ENCODE measurements at regions of chr3 and their contacts with region 1.

Region 1: DNA sequence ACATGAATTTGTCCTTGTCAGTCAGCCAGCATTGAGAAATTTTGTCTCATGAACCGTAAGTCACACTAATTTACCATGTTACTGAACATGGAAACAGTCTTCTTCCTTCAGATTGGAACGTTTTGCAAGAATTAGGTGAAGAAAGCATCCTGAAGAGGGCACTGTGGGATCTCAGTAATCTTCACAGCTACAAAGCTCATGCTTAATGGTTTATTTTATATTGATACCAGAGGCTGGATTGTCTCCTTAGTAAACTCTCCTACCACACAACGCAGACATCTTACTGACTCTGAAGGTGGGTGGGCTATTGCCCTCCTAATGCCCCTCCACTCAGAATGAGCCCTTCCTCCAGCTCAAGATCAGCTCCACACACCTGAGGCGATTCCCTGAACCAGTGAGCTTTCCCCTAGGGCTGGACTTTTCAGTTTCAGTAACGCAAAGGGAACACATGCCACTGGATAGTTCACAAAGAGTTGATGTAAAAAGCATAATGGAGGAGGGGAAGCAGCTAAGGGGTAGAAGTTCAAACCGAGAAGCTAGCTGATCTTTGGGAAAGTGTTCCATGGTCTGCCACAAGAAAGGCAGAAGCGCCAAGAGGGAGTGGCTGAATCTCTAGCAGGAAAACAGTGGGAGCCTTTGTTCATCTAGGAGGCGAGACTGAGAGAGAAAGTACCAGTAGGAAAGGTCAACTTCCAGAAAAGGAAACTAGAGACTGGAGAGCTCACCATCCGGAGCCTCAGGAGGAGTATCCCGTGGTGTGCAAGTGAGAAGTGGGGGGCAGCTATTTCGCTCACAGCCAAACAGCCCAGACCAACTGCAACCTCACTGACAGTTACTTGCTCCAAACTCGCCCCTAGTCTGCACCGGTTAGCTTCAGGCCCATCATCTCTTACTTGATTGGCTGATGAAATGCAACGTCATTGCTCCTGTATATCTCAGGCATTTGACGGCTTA is at the start of gene SLC9C1:
- DNase-seq: peak; percentile 52
- ATAC-seq: peak; percentile 81
- H3K4me3 Mint-ChIP-seq: peak within 1 kb of the TSS; percentile 53
- H3K27ac Mint-ChIP-seq: peak within 1 kb of the TSS; percentile 38
- H3K4me1 Mint-ChIP-seq: peaks cover 21% of the 10 kb centered on the region
- H3K27me3 Mint-ChIP-seq: no peaks in the 10 kb centered on the region
- total RNA-seq, gene SLC9C1: not detected

Region 2: DNA sequence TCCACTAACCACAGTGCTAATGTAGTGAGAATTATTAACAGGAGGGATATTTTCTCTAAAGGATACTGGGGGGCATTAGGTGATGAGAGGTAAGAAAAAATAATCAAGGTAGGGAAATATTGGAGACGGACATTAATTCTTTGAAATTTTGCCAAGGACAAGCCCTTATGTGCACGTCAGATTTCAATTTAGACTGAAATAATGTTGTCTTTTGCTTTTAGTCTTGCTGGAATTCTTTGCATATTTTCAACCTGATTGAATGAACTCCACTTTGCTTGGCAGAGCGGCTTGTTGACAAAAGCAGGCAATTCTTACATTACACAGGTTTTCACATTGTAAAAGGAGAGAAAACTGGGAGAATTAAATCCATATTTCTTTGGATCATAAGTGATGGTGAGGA is 232.5 kb before region 1 on chr3:
- CTCF ChIA-PET with region 1: no interaction called
- POLR2A ChIA-PET with region 1: no interaction called
- intact Hi-C with region 1: no loop called
- DNase-seq: no peak
- ATAC-seq: no peak
- H3K4me3 Mint-ChIP-seq: no peak overlapping the region
- H3K27ac Mint-ChIP-seq: no peak overlapping the region
- H3K4me1 Mint-ChIP-seq: peaks cover 15% of the 10 kb centered on the region
- H3K27me3 Mint-ChIP-seq: no peaks in the 10 kb centered on the region

Region 3: GRCh38 chr3:112233081-112233480 is 60.6 kb before region 1 on chr3:
- CTCF ChIA-PET with region 1: no interaction called
- POLR2A ChIA-PET with region 1: no interaction called
- intact Hi-C with region 1: no loop called
- DNase-seq: no peak
- ATAC-seq: no peak
- H3K4me3 Mint-ChIP-seq: no peak overlapping the region
- H3K27ac Mint-ChIP-seq: no peak overlapping the region
- H3K4me1 Mint-ChIP-seq: peaks cover 10% of the 10 kb centered on the region
- H3K27me3 Mint-ChIP-seq: no peaks in the 10 kb centered on the region

Region 4: DNA sequence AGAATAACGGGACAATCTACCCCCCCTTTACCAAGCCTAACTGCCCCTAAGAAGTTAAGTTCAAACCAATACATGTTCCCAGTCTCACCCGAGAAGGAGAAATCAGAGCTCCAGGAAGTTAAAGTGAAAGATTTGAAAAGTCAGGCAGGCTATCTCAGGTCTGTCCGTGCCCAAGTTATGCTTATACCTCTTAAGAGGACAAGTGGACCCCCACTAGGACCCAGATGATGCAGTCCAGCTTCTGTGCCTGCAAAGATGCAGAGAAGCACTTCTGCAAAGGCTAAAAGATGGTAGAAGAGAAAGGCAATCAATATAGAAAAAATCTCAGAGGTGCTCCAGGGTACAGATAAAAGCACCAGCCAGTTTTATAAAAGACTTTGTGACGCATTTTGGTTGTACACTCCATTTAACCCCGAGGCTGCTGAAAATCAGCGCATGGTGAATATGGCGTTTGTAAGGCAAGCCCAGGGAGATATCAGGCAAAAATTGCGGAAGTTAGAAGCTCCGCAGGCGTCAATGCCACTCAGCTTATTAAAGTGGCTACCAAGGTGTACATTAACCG is 10.2 kb after region 1 on chr3:
- CTCF ChIA-PET with region 1: interaction called, 33 read pairs
- POLR2A ChIA-PET with region 1: no interaction called
- intact Hi-C with region 1: no loop called
- DNase-seq: no peak
- ATAC-seq: peak; percentile 45
- H3K4me3 Mint-ChIP-seq: no peak overlapping the region
- H3K27ac Mint-ChIP-seq: no peak overlapping the region
- H3K4me1 Mint-ChIP-seq: no peaks in the 10 kb centered on the region
- H3K27me3 Mint-ChIP-seq: no peaks in the 10 kb centered on the region

Region 5: GRCh38 chr3:112327371-112327951 is 33.8 kb after region 1 on chr3:
- CTCF ChIA-PET with region 1: interaction called, 13 read pairs
- POLR2A ChIA-PET with region 1: interaction called, 4 read pairs
- intact Hi-C with region 1: loop called in 1 of 2 experiments (anchors 2 kb)
- DNase-seq: peak; percentile 54
- ATAC-seq: peak; percentile 100
- H3K4me3 Mint-ChIP-seq: no peak overlapping the region
- H3K27ac Mint-ChIP-seq: no peak overlapping the region
- H3K4me1 Mint-ChIP-seq: peaks cover 4% of the 10 kb centered on the region
- H3K27me3 Mint-ChIP-seq: peaks cover 7% of the 10 kb centered on the region

Region 6: GRCh38 chr3:112531358-112531781 is 237.7 kb after region 1 on chr3:
- CTCF ChIA-PET with region 1: interaction called, 27 read pairs
- POLR2A ChIA-PET with region 1: no interaction called
- intact Hi-C with region 1: loop called (anchors 1 to 2 kb)
- DNase-seq: no peak
- ATAC-seq: no peak
- H3K4me3 Mint-ChIP-seq: no peak overlapping the region
- H3K27ac Mint-ChIP-seq: no peak overlapping the region
- H3K4me1 Mint-ChIP-seq: peaks cover 10% of the 10 kb centered on the region
- H3K27me3 Mint-ChIP-seq: no peaks in the 10 kb centered on the region